ENCODE measurements at regions of chr12 and their contacts with region 1.

Region 1: DNA sequence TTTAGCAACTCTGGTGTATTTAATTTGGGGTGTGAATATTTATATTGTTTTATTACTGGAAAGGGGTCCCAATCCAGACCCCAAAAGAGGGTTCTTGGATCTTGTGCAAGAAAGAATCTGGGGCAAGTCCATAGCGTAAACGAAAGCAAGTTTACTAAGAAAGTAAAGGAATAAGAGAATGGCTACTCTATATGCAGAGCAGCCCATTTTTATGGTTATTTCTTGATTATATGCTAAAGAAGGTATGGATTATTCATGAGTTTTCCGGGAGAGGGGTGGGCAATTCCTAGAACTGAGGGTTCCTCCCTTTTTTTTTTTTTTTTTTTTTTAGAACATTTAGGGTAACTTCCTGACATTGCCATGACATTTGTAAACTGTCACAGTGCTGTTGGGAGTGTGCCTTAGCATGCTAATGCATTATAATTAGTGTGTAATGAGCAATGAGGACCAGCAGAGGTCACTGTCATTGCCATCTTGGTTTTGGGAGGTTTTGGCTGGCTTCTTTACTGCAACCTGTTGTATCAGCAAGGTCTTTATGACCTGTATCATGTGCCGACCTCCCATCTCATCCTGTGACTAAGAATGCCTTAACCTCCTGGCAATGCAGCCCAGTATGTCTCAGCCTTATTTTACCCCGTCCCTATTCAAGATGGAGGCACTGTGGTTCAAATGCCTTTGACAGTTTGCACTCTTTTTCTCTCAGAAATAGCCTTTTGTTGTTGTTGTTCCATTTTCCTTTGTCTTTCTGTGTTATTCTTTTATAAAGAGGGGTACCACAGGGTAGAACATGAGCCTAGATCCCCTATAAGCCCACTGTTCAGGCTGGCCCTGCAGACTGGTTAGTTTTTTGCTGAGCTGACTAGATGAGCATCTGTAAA is 75.5 kb upstream of the DCD start:
- DNase-seq: peak in 5 of 9 experiments; percentile 10 to 70 (median 26)
- ATAC-seq: peak; percentile 72
- H3K4me3 ChIP-seq: no peak overlapping the region
- H3K4me3 Mint-ChIP-seq: no peak overlapping the region
- H3K27ac ChIP-seq: no peak overlapping the region
- H3K27ac Mint-ChIP-seq: no peak overlapping the region
- H3K4me1 ChIP-seq: peaks cover 10% of the 10 kb centered on the region
- H3K4me1 Mint-ChIP-seq: peaks cover 18% of the 10 kb centered on the region
- H3K27me3 ChIP-seq: no peaks in the 10 kb centered on the region
- H3K27me3 Mint-ChIP-seq: peaks cover 6% of the 10 kb centered on the region
- CTCF ChIP-seq: peak; percentile 67

Region 2: DNA sequence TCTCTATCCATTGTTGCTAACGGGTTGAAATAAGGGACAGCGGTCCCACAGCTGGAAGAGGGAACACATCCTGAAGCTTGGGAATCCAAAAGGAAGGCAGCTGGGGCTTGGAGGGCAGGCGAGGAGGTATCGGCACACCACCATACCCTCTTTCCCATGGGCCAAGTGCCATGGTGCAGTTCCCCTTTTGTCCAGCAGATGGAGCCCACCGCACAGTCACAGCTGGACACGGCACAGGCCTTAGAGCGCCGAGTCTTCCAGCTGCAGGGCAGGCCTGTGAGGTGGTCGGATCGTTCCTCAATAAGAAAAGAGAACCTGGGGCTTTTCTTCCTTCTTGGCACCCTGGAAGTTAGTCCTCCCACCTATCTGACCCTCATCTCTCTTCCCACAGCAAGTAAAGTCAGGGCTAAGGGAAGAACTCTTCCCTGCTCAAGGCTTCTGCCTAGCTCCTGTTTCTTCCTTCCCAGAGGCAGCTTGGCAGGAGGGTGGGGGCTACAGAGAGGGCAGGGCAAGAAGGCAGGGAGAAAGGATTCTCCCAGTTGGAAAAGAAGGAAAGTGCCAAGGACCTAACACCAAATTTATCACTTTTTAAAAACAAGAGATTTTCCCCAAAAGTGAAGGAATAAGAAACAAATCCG is 143.8 kb before region 1 on chr12:
- CTCF ChIA-PET with region 1: no interaction called
- POLR2A ChIA-PET with region 1: no interaction called
- intact Hi-C with region 1: no loop called
- DNase-seq: peak; percentile 66 to 87 (median 80)
- ATAC-seq: peak; percentile 98
- H3K4me3 ChIP-seq: no peak overlapping the region
- H3K4me3 Mint-ChIP-seq: no peak overlapping the region
- H3K27ac ChIP-seq: no peak overlapping the region
- H3K27ac Mint-ChIP-seq: no peak overlapping the region
- H3K4me1 ChIP-seq: peaks cover 6% of the 10 kb centered on the region
- H3K4me1 Mint-ChIP-seq: peaks cover 5% of the 10 kb centered on the region
- H3K27me3 ChIP-seq: no peaks in the 10 kb centered on the region
- H3K27me3 Mint-ChIP-seq: peaks cover 9% of the 10 kb centered on the region
- CTCF ChIP-seq: peak; percentile 97

Region 3: DNA sequence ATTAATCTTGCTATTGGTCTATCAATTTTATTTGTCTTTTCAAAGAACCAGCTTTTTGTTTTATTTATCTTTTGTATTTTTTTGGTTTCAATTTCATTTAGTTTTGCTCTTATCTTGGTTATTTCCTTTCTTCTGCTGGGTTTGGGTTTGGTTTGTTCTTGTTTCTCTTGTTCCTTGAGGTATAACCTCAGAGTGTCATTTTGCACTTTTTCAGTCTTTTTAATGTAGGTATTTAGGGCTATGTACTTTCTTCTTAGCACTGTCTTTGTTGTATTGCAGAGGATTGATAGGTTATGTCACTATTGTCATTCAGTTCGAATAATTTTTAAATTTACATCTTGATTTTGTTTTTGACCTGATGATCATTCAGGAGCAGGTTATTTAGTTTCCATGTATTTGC is 17.3 kb after region 1 on chr12:
- CTCF ChIA-PET with region 1: interaction called, 14 read pairs
- POLR2A ChIA-PET with region 1: no interaction called
- intact Hi-C with region 1: no loop called
- DNase-seq: peak in 2 of 9 experiments; percentile 25 to 59
- ATAC-seq: peak; percentile 69
- H3K4me3 ChIP-seq: no peak overlapping the region
- H3K4me3 Mint-ChIP-seq: peak overlapping the region; percentile 59
- H3K27ac ChIP-seq: peak overlapping the region in 1 of 2 experiments; percentile 70
- H3K27ac Mint-ChIP-seq: peak overlapping the region; percentile 77
- H3K4me1 ChIP-seq: peaks cover 56% of the 10 kb centered on the region
- H3K4me1 Mint-ChIP-seq: peaks cover 84% of the 10 kb centered on the region
- H3K27me3 ChIP-seq: no peaks in the 10 kb centered on the region
- H3K27me3 Mint-ChIP-seq: no peaks in the 10 kb centered on the region
- CTCF ChIP-seq: no peak

Region 4: GRCh38 chr12:54765650-54766049 is 42.0 kb after region 1 on chr12:
- CTCF ChIA-PET with region 1: no interaction called
- POLR2A ChIA-PET with region 1: no interaction called
- intact Hi-C with region 1: no loop called
- DNase-seq: no peak
- ATAC-seq: no peak
- H3K4me3 ChIP-seq: no peak overlapping the region
- H3K4me3 Mint-ChIP-seq: no peak overlapping the region
- H3K27ac ChIP-seq: no peak overlapping the region
- H3K27ac Mint-ChIP-seq: peak overlapping the region; percentile 10
- H3K4me1 ChIP-seq: no peaks in the 10 kb centered on the region
- H3K4me1 Mint-ChIP-seq: peaks cover 12% of the 10 kb centered on the region
- H3K27me3 ChIP-seq: no peaks in the 10 kb centered on the region
- H3K27me3 Mint-ChIP-seq: no peaks in the 10 kb centered on the region
- CTCF ChIP-seq: no peak

Measured in CD8-positive, alpha-beta T cell (primary cell).